Heart left ventricle (tissue), 16 donors: ENCODE measurements at regions of chr7 and their contacts with region 1.

Region 1: DNA sequence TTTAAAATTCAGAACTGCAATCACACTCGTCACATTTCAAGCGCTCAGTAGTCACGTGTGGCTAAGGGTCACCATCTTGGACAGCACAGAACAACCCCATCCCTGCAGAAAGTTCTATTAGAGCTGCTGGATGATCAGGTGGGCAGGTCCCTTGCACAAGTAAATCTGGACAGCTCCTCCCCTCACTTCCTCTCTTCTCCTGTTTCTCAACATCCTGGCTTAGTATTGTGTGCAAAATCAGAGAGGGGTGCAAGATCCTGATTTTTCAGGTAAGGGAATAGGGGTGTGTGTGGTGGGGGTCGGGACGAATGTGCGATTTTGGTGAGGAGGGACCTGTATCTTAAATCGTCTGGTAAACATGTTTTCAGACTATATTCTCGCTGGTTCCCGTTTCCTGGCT is at the start of gene GIMAP4:
- DNase-seq: peak in 1 of 5 donors; percentile 44
- ATAC-seq: peak; percentile 68 to 85 (median 80)
- H3K4me3 ChIP-seq: peak within 1 kb of the TSS; percentile 35 to 82 (median 60)
- H3K27ac ChIP-seq: peak within 1 kb of the TSS; percentile 74 to 93 (median 88)
- H3K4me1 ChIP-seq: peaks cover 0 to 45% (median 8%) of the 10 kb centered on the region in 12 donors
- H3K27me3 ChIP-seq: no peaks in the 10 kb centered on the region
- CTCF ChIP-seq: no peak
- POLR2A ChIP-seq: peak in 1 of 2 donors; percentile 43
- total RNA-seq, gene GIMAP4: 25.1 to 80.2 (median 35.2) TPM

Region 2: GRCh38 chr7:150520145-150520544 is 47.0 kb before region 1 on chr7:
- intact Hi-C with region 1: loop called in 4 of 10 experiments (anchors 5 kb)
- DNase-seq: no peak
- ATAC-seq: peak in 3 of 4 donors; percentile 22 to 44 (median 34)
- H3K4me3 ChIP-seq: peak overlapping the region in 10 of 12 donors; percentile 23 to 69 (median 62)
- H3K27ac ChIP-seq: peak overlapping the region in 11 of 12 donors; percentile 43 to 92 (median 85)
- H3K4me1 ChIP-seq: peaks cover 0 to 26% (median 0%) of the 10 kb centered on the region in 12 donors
- H3K27me3 ChIP-seq: no peaks in the 10 kb centered on the region
- CTCF ChIP-seq: no peak
- POLR2A ChIP-seq: no peak

Region 3: GRCh38 chr7:150903606-150904005 is 336.4 kb after region 1 on chr7:
- intact Hi-C with region 1: no loop called
- DNase-seq: peak; percentile 75 to 92 (median 87)
- ATAC-seq: peak; percentile 92 to 97 (median 94)
- H3K4me3 ChIP-seq: no peak overlapping the region
- H3K27ac ChIP-seq: peak overlapping the region in 11 of 12 donors; percentile 1 to 76 (median 66)
- H3K4me1 ChIP-seq: peaks cover 0 to 35% (median 8%) of the 10 kb centered on the region in 12 donors
- H3K27me3 ChIP-seq: peaks cover 0 to 38% (median 0%) of the 10 kb centered on the region in 9 donors
- CTCF ChIP-seq: peak in 2 of 12 donors; percentile 8 to 18
- POLR2A ChIP-seq: no peak